Tibial artery (tissue), 4 donors: ENCODE measurements at regions of chr3 and their contacts with region 1.

Region 1: GRCh38 chr3:34895841-34896240 is 743.5 kb upstream of the ARPP21 start:
- DNase-seq: no peak
- H3K4me3 ChIP-seq: no peak overlapping the region
- H3K27ac ChIP-seq: no peak overlapping the region
- H3K4me1 ChIP-seq: no peaks in the 10 kb centered on the region
- H3K27me3 ChIP-seq: no peaks in the 10 kb centered on the region
- CTCF ChIP-seq: no peak

Region 2: GRCh38 chr3:34929036-34929435 is 33.2 kb after region 1 on chr3:
- intact Hi-C with region 1: no loop called
- DNase-seq: no peak
- H3K4me3 ChIP-seq: no peak overlapping the region
- H3K27ac ChIP-seq: no peak overlapping the region
- H3K4me1 ChIP-seq: no peaks in the 10 kb centered on the region
- H3K27me3 ChIP-seq: no peaks in the 10 kb centered on the region
- CTCF ChIP-seq: no peak

Region 3: DNA sequence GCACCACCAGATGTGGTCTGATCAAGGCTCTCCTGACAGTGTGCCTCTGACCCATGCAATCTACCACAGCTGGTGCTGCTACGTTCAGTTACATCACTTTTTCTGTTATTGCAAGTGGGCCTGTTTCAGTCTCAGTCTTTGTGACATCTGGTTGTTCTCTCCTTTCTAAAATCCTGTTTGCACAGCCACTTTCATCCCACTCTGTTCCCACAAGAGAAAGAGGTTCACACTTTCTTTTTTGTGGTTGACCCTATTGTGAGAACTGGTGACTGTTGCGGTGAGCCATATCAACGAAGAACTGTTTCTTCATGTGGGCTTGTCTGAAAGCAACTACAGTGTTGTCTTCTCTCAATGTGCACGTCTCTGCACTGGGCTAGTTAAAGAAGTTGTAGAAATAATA is 400.7 kb after region 1 on chr3:
- intact Hi-C with region 1: loop called (anchors 10 kb)
- DNase-seq: no peak
- H3K4me3 ChIP-seq: no peak overlapping the region
- H3K27ac ChIP-seq: no peak overlapping the region
- H3K4me1 ChIP-seq: no peaks in the 10 kb centered on the region
- H3K27me3 ChIP-seq: no peaks in the 10 kb centered on the region
- CTCF ChIP-seq: no peak